ENCODE measurements at regions of chr11 and their contacts with region 1.

Region 1: GRCh38 chr11:727859-728748 is 19.2 kb upstream of the TALDO1 start:
- DNase-seq: peak; percentile 84
- H3K4me3 ChIP-seq: no peak overlapping the region
- H3K27ac ChIP-seq: peak overlapping the region; percentile 76 to 83
- H3K4me1 ChIP-seq: peaks cover 38% of the 10 kb centered on the region
- H3K27me3 ChIP-seq: no peaks in the 10 kb centered on the region
- CTCF ChIP-seq: peak; percentile 92 to 97 (median 95)
- POLR2A ChIP-seq: no peak

Region 2: DNA sequence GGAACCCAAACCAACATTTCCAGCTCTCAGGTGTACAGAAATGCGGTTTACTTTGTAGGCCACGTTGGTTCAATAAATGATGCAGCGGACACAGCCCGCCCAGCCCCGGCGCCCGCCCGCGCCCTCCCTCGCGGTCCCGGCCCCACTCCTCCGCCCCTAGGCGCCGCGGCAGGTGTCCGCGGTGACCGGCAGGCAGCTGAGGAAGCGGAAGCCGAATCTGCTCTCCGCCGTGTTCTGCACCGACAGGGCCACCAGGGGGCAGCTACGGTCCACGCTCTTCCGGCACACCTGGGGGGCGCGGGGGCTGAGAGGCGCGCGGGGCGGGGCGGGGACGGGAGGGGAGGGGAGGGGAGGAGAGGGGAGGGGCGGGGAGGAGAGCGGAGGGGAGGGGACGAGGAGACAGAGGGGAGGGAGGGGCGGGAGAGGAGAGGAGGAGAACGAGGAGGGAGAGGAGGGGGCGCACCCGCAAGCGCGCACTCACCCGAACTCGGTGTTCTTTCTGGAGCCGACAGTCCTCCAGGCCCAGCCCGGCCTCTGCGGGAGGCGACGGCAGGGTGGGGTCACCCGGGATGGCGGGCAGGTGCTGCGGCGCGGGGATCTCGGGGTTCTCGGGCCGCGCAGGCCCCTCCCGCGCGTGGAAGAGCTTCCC is 173.2 kb before region 1 on chr11:
- intact Hi-C with region 1: loop called (anchors 10 kb)
- DNase-seq: peak; percentile 76
- H3K4me3 ChIP-seq: peak overlapping the region; percentile 32 to 46
- H3K27ac ChIP-seq: no peak overlapping the region
- H3K4me1 ChIP-seq: peaks cover 12% of the 10 kb centered on the region
- H3K27me3 ChIP-seq: no peaks in the 10 kb centered on the region
- CTCF ChIP-seq: peak; percentile 29 to 59 (median 59)
- POLR2A ChIP-seq: no peak

Region 3: DNA sequence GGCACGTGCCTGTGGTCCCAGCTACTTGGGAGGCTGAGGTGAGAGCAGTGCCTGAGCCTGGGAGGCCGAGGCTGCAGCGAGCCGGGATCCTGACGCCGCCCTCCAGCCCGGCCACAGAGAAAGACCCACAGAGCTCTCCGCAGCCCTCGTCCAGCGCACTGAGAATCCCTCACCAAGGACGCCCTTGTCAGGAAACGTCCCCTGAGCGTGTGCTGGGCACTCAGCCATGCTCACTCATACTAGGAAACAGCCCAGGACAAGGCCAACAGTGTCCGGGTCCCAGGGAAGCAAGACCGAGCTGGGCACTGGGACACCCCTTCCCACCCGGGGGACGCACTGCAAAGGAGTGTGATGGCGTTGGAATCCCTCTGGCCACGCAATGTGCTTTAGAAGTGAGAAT is 47.6 kb before region 1 on chr11:
- intact Hi-C with region 1: no loop called
- DNase-seq: peak; percentile 68
- H3K4me3 ChIP-seq: no peak overlapping the region
- H3K27ac ChIP-seq: no peak overlapping the region
- H3K4me1 ChIP-seq: peaks cover 14% of the 10 kb centered on the region
- H3K27me3 ChIP-seq: no peaks in the 10 kb centered on the region
- CTCF ChIP-seq: no peak
- POLR2A ChIP-seq: no peak

Region 4: DNA sequence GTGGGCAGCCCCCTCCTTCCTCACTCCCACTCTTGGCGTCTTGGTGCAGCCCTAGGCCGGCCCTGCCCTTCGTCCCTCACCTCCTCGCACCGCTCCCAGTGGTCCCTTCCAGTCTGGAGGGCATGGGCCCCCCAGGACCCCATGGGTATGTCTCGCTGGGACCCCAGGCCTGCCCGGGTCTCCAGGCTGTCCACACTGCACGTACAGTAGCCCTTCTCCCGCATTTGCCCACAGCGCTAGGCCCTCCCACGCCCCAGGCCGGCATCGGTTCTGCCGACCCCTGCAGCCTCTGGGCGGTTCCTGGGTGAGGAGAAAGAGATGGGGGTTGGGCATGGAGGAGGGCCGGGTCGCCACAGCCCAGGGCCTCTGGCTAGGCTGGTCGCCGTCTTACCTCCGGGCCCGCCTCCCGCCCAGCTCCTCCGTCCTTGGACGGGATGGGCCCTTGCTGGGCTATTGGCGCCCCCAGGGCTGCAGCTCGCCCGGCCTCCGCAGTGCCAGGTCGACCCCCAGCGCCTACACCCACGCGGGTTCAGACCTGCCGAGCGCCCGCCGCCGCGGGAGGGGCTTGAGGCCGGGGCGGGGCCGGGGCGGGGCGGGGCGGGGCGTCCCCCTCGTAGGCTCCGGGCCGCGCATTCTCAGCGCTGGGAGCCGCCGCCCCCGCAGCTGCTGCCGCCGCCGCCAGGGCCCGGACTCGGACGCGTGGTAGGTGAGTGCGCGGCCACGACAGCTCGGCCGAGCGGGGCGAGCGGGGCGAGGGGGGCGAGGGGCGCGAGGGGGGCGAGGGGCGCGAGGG is 104.4 kb after region 1 on chr11 and contains the start of gene CD151:
- intact Hi-C with region 1: no loop called
- DNase-seq: peak; percentile 76
- H3K4me3 ChIP-seq: peak within 1 kb of the TSS; percentile 60 to 76
- H3K27ac ChIP-seq: peak within 1 kb of the TSS; percentile 55 to 81
- H3K4me1 ChIP-seq: peaks cover 48% of the 10 kb centered on the region
- H3K27me3 ChIP-seq: no peaks in the 10 kb centered on the region
- CTCF ChIP-seq: no peak
- POLR2A ChIP-seq: no peak
- total RNA-seq, gene CD151: 108 to 195 TPM